PC-9 (cell line): ENCODE measurements at regions of chr14 and their contacts with region 1.

Region 1: GRCh38 chr14:50231475-50232275 is at the start of gene SOS2:
- DNase-seq: peak; percentile 58 to 82
- H3K4me3 ChIP-seq: peak within 1 kb of the TSS; percentile 83
- H3K27ac ChIP-seq: peak within 1 kb of the TSS; percentile 62
- H3K4me1 ChIP-seq: peaks cover 22% of the 10 kb centered on the region
- H3K27me3 ChIP-seq: no peaks in the 10 kb centered on the region
- CTCF ChIP-seq: no peak
- total RNA-seq, gene SOS2: 13.8 and 14.9 TPM in 2 replicates

Region 2: GRCh38 chr14:50018201-50018932 is 213.3 kb before region 1 on chr14:
- CTCF ChIA-PET with region 1: no interaction called
- POLR2A ChIA-PET with region 1: interaction called, 21 read pairs
- intact Hi-C with region 1: no loop called
- DNase-seq: peak; percentile 43 to 88
- H3K4me3 ChIP-seq: no peak overlapping the region
- H3K27ac ChIP-seq: peak overlapping the region; percentile 72
- H3K4me1 ChIP-seq: peaks cover 52% of the 10 kb centered on the region
- H3K27me3 ChIP-seq: no peaks in the 10 kb centered on the region
- CTCF ChIP-seq: no peak

Region 3: GRCh38 chr14:50116181-50116956 is 115.3 kb before region 1 on chr14 and contains the start of gene VCPKMT:
- CTCF ChIA-PET with region 1: no interaction called
- POLR2A ChIA-PET with region 1: no interaction called
- intact Hi-C with region 1: loop called (anchors 5 kb)
- DNase-seq: peak; percentile 79 to 93
- H3K4me3 ChIP-seq: peak within 1 kb of the TSS; percentile 84
- H3K27ac ChIP-seq: peak within 1 kb of the TSS; percentile 66
- H3K4me1 ChIP-seq: peaks cover 22% of the 10 kb centered on the region
- H3K27me3 ChIP-seq: no peaks in the 10 kb centered on the region
- CTCF ChIP-seq: no peak
- total RNA-seq, gene VCPKMT: 6.5 and 9.4 TPM in 2 replicates

Region 4: DNA sequence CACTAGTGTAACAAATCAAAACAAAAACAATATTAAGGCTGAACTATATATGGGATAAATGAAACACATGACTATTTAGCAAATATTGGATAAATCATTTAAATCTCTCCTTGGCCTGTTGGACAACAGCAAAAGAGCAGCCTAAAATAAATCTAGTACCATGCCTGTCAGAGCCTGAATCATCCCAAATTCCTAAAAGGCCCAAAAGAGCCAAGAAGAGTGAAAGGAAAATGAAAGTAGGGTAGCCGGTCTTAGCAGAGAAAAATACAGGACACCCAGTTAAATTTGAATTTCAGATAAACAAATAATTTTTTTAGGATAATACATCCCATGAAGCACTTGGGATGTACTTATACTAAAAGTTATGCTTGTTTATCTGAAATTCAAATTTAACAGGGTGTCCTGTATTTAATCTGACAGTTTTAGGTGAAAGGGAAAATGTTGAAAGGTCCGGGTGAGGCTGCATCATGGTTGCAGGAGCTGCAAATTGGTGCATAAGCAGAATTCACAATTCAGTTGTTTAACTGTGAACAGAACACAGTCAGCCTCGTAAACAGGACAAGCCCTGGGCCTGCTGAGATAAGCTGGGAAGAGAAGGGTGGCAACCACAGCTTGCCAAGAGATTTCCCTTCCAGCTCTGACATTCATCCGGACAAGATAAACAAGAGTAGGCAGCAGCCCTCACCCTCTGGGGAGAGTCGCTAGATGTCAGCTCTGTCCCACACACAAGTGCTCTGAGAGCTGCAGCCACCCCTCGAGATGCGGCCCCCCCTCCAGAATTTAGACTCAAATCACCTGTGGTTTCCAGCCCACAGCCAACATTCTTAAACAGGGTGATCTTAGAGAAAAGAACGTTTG is 110.8 kb after region 1 on chr14:
- CTCF ChIA-PET with region 1: no interaction called
- POLR2A ChIA-PET with region 1: no interaction called
- intact Hi-C with region 1: no loop called
- DNase-seq: peak in 1 of 2 experiments; percentile 21
- H3K4me3 ChIP-seq: no peak overlapping the region
- H3K27ac ChIP-seq: no peak overlapping the region
- H3K4me1 ChIP-seq: peaks cover 6% of the 10 kb centered on the region
- H3K27me3 ChIP-seq: no peaks in the 10 kb centered on the region
- CTCF ChIP-seq: no peak

Region 5: DNA sequence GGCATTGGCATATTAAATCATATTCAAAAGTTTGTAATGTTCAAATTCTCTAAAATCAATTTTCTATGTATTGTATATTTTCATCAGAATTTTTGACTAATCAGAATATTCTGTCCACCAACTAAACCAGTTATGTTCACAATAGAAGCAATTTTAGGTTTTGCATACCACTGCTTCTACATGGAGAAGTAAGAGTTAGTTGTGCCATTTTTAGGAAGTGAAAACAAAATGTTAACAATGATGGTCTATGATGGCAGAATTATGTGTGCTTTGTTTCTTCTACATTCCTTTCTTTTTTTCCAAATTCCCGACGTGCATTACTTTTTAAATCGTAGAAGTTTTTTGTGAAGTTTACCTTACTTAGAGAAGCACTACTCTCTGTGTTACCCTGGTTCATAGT is 669.7 kb after region 1 on chr14:
- CTCF ChIA-PET with region 1: no interaction called
- POLR2A ChIA-PET with region 1: no interaction called
- intact Hi-C with region 1: no loop called
- DNase-seq: no peak
- H3K4me3 ChIP-seq: no peak overlapping the region
- H3K27ac ChIP-seq: no peak overlapping the region
- H3K4me1 ChIP-seq: no peaks in the 10 kb centered on the region
- H3K27me3 ChIP-seq: no peaks in the 10 kb centered on the region
- CTCF ChIP-seq: no peak